ENCODE measurements at regions of chr2 and their contacts with region 1.

Region 1: GRCh38 chr2:127174136-127174535 is 46.0 kb downstream of the CYP27C1 start:
- DNase-seq: peak; percentile 39
- ATAC-seq: peak; percentile 77
- H3K4me3 ChIP-seq: no peak overlapping the region
- H3K27ac ChIP-seq: no peak overlapping the region
- H3K4me1 ChIP-seq: peaks cover 7% of the 10 kb centered on the region
- H3K27me3 ChIP-seq: no peaks in the 10 kb centered on the region
- CTCF ChIP-seq: peak; percentile 42; the same call in 1 of the 2 replicates

Region 2: GRCh38 chr2:127064642-127065250 is 109.4 kb before region 1 on chr2:
- CTCF ChIA-PET with region 1: interaction called, 3 read pairs
- POLR2A ChIA-PET with region 1: no interaction called
- intact Hi-C with region 1: loop called (anchors 1 kb)
- DNase-seq: peak; percentile 98
- ATAC-seq: peak; percentile 97
- H3K4me3 ChIP-seq: peak overlapping the region; percentile 32; the same call in 1 of the 2 replicates
- H3K27ac ChIP-seq: peak overlapping the region; percentile 74
- H3K4me1 ChIP-seq: peaks cover 18% of the 10 kb centered on the region
- H3K27me3 ChIP-seq: no peaks in the 10 kb centered on the region
- CTCF ChIP-seq: peak; percentile 47

Region 3: DNA sequence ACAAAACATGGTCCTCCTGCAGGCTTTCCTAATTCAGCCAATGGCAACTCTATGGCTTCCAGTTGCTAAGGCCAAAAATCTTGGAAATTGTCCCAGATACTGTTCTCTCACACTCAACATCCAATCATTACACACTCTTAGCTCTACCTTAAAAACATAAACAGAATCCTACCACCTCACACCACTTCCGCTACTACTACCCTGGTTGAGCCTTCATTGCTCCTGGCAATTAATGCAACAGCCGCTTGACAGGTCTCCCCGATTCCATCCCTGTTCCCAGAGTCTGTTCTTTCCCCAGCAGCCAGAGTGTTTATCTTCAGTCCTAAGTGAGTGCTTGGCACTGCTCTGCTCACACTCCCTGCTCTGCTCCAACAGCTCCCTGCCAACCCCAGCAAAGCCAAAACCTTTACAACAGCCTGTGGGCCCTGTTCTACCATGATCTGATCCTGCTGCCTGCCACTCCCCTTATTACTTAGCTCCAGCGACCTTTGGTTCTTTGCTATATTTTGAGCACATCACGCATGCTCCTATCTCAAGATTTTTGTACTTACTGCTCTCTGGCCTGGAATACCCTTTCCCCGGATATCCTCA is 779.1 kb after region 1 on chr2:
- CTCF ChIA-PET with region 1: no interaction called
- POLR2A ChIA-PET with region 1: no interaction called
- intact Hi-C with region 1: no loop called
- DNase-seq: no peak
- ATAC-seq: no peak
- H3K4me3 ChIP-seq: no peak overlapping the region
- H3K27ac ChIP-seq: no peak overlapping the region
- H3K4me1 ChIP-seq: peaks cover 19% of the 10 kb centered on the region
- H3K27me3 ChIP-seq: no peaks in the 10 kb centered on the region
- CTCF ChIP-seq: no peak